Spleen (tissue), 13 donors: ENCODE measurements at regions of chr19 and their contacts with region 1.

Region 1: GRCh38 chr19:54653181-54653809 is 9.5 kb upstream of the LILRB4 start:
- DNase-seq: no peak
- H3K4me3 ChIP-seq: no peak overlapping the region
- H3K27ac ChIP-seq: no peak overlapping the region
- H3K4me1 ChIP-seq: no peaks in the 10 kb centered on the region
- H3K27me3 ChIP-seq: peaks cover 0 to 9% (median 0%) of the 10 kb centered on the region in 7 donors
- CTCF ChIP-seq: peak in 9 of 11 experiments; percentile 20 to 64 (median 56)
- POLR2A ChIP-seq: no peak

Region 2: DNA sequence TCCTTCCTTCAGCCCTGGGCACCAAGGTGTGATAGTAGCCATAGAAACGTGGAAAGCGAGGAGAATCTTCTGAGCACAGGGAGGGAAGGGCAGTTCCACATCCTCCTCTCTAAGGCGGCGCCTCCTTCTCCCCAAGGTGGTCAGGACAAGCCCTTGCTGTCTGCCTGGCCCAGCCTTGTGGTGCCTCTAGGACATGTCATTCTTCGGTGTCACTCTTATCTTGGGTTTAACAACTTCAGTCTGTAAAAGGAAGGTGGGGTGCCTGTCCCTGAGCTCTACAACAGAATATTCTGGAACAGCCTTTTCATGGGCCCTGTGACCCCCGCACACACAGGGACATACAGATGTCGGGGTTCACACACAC is 86.8 kb after region 1 on chr19:
- intact Hi-C with region 1: no loop called
- DNase-seq: no peak
- H3K4me3 ChIP-seq: no peak overlapping the region
- H3K27ac ChIP-seq: no peak overlapping the region
- H3K4me1 ChIP-seq: no peaks in the 10 kb centered on the region
- H3K27me3 ChIP-seq: no peaks in the 10 kb centered on the region
- CTCF ChIP-seq: no peak
- POLR2A ChIP-seq: no peak

Region 3: GRCh38 chr19:54916822-54917221 is 263.5 kb after region 1 on chr19:
- intact Hi-C with region 1: loop called (anchors 10 kb)
- DNase-seq: peak; percentile 62
- H3K4me3 ChIP-seq: no peak overlapping the region
- H3K27ac ChIP-seq: peak overlapping the region in 3 of 8 donors; percentile 40 to 46 (median 44)
- H3K4me1 ChIP-seq: peaks cover 0 to 16% (median 4%) of the 10 kb centered on the region in 6 donors
- H3K27me3 ChIP-seq: peaks cover 0 to 60% (median 0%) of the 10 kb centered on the region in 7 donors
- CTCF ChIP-seq: no peak
- POLR2A ChIP-seq: no peak